ENCODE measurements at regions of chr12 and their contacts with region 1.

Region 1: DNA sequence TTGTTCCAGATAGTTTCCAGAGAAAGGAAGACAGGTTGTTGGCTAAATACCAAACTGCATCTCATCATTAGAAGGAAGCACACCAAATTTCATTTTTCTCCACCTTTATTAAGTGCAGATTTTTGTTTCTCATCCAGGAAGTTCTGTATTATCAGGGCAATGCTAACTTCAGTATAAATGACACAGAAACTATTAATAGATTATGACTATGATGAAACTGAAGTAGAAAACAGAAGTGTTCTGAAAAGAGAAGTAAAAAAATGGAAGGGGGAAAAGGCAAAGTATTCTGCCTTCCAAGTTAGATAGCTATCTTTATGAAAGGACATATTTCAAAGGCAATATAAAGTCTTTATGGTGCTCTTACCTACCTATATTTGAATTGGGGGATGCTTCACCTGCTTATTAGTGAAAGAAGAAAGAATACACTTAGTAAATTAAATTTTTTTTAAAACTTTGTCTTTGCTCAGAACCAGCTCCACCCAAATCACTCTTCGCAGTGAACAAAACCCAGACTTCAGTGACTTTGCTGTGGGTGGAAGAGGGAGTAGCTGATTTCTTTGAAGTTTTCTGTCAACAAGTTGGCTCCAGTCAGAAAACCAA is 223.9 kb downstream of the PTPRO start:
- DNase-seq: peak; percentile 58
- H3K4me3 Mint-ChIP-seq: peak overlapping the region; percentile 69
- H3K27ac Mint-ChIP-seq: peak overlapping the region; percentile 100
- H3K4me1 Mint-ChIP-seq: peaks cover 75% of the 10 kb centered on the region
- H3K27me3 Mint-ChIP-seq: no peaks in the 10 kb centered on the region

Region 2: GRCh38 chr12:15563663-15564062 is 17.5 kb after region 1 on chr12:
- CTCF ChIA-PET with region 1: interaction called, 10 read pairs
- DNase-seq: peak; percentile 45
- H3K4me3 Mint-ChIP-seq: peak overlapping the region; percentile 58
- H3K27ac Mint-ChIP-seq: peak overlapping the region; percentile 94
- H3K4me1 Mint-ChIP-seq: peaks cover 77% of the 10 kb centered on the region
- H3K27me3 Mint-ChIP-seq: peaks cover 4% of the 10 kb centered on the region

Measured in activated naive CD4-positive, alpha-beta T cell treated with anti-CD3 and anti-CD28 coated beads, Interleukin-2, amount 10 ng/mL, durations not matched to agents 7 days and 5 days (primary cell).